ENCODE measurements at regions of chr1 and their contacts with region 1.

Region 1: DNA sequence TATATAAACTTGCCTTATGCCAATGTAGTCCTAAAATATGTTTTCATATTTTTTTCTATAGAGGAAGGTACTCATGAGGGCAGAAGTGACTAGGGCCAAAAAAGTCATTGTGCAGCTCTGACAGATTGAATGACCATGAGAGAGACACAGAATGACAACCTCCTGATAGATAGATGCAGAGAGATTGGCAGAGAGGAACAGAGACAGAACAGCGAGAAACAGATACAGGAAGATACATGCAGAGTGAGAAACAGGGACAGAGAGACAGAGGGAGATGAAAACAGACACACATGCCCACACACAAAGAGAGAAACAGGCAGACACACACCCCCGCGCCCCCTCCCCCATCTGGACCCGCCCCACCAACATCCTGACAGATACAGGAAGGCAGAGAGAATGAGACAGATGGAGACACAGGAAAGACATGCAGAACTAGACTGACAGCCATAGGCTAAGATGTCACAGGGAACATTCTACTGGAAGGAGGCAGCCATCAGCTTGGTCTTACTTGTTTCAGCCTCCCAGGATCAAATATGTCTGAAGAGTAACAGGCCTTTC is 211.1 kb downstream of the ST6GALNAC3 start:
- DNase-seq: no peak
- ATAC-seq: no peak
- H3K4me3 ChIP-seq: no peak overlapping the region
- H3K27ac ChIP-seq: no peak overlapping the region
- H3K4me1 ChIP-seq: no peaks in the 10 kb centered on the region
- H3K27me3 ChIP-seq: no peaks in the 10 kb centered on the region; a peak in 1 of 4 replicates
- CTCF ChIP-seq: no peak
- EP300 ChIP-seq: no peak
- POLR2A ChIP-seq: no peak
- RAD21 ChIP-seq: no peak

Region 2: DNA sequence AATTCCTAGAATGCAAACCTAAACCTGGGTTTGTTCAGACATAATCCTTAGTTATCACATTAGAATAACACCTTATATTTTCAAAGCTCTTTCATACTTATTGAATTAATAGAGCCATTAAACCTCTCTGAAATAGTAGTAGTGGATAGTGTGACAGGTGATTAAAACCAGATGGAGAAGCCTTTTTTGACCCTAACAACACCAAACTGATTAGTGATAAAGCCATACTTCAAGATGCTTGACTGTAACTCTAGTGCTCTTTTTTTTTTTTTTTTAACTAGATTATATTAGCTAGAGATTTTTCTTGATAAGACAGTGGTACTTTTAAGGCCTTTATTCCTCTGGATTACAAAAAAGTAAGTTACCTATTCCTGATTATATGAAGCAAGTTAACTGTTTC is 21.0 kb before region 1 on chr1:
- CTCF ChIA-PET with region 1: no interaction called
- POLR2A ChIA-PET with region 1: no interaction called
- RAD21 ChIA-PET with region 1: no interaction called
- SMC1A ChIA-PET with region 1: no interaction called
- in situ Hi-C with region 1: no loop called
- intact Hi-C with region 1: loop called (anchors 2 kb)
- DNase-seq: no peak
- ATAC-seq: no peak
- H3K4me3 ChIP-seq: no peak overlapping the region
- H3K27ac ChIP-seq: no peak overlapping the region
- H3K4me1 ChIP-seq: peaks cover 1% of the 10 kb centered on the region; the same call in 1 of the 2 replicates
- H3K27me3 ChIP-seq: no peaks in the 10 kb centered on the region
- CTCF ChIP-seq: no peak
- EP300 ChIP-seq: no peak
- POLR2A ChIP-seq: no peak
- RAD21 ChIP-seq: no peak